AG04450 (cell line): ENCODE measurements at regions of chr17 and their contacts with region 1.

Region 1: GRCh38 chr17:44878627-44879221 is 20.5 kb downstream of the EFTUD2 start:
- DNase-seq: no peak
- H3K4me3 ChIP-seq: no peak overlapping the region
- H3K27ac ChIP-seq: no peak overlapping the region
- H3K27me3 ChIP-seq: no peaks in the 10 kb centered on the region
- CTCF ChIP-seq: peak; percentile 70

Region 2: DNA sequence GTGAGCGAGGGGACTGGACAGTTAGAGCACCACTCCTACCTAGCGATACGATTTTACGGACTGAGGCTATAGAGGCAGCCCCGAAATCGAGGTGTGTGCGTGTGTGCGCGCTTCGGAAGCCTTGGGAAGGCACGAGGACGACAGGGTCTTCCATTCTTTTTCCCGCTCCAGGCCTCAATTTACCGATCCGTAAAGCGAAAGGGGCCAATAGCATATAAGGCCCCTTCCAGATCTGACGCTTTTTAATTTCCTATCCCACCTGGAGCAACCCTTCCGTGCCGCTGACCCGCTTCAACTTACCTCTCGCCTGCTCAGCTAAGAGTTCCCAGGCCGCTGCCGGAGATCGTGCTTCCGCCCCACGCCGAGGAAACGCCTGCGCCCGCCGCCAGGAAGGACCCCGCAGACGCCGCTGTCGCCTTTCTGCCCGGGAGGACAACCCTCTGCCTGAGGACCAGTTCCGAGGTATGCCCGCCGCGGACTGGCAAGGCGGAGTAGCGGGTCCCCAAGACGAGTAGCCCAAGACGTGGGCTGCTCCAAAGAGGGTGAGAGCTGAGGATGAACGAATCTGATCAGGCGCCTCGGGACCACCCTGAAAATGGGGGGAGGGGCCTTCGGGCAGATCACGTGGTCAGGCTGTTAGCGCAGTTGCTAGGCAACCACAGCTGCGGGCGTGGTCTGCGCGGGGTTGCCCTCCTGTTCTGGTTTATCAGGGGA is 20.5 kb after region 1 on chr17 and contains the start of gene EFTUD2:
- CTCF ChIA-PET with region 1: interaction called, 15 read pairs
- POLR2A ChIA-PET with region 1: no interaction called
- DNase-seq: peak; percentile 74
- H3K4me3 ChIP-seq: peak within 1 kb of the TSS; percentile 98
- H3K27ac ChIP-seq: peak within 1 kb of the TSS; percentile 94
- H3K27me3 ChIP-seq: no peaks in the 10 kb centered on the region
- CTCF ChIP-seq: no peak
- polyA plus RNA-seq, gene EFTUD2: 123 and 147 TPM in 2 replicates

Region 3: GRCh38 chr17:45101546-45102403 is 223.1 kb after region 1 on chr17:
- CTCF ChIA-PET with region 1: no interaction called
- POLR2A ChIA-PET with region 1: no interaction called
- DNase-seq: no peak
- H3K4me3 ChIP-seq: no peak overlapping the region
- H3K27ac ChIP-seq: peak overlapping the region; percentile 34
- H3K27me3 ChIP-seq: no peaks in the 10 kb centered on the region
- CTCF ChIP-seq: no peak